Spleen (tissue), 13 donors: ENCODE measurements at regions of chr17 and their contacts with region 1.

Region 1: GRCh38 chr17:63904316-63904715 is 6.7 kb downstream of the CSHL1 start:
- DNase-seq: no peak
- H3K4me3 ChIP-seq: no peak overlapping the region
- H3K27ac ChIP-seq: no peak overlapping the region
- H3K4me1 ChIP-seq: peaks cover 0 to 7% (median 0%) of the 10 kb centered on the region in 6 donors
- H3K27me3 ChIP-seq: no peaks in the 10 kb centered on the region
- CTCF ChIP-seq: no peak
- POLR2A ChIP-seq: no peak

Region 2: GRCh38 chr17:63881876-63882601 is 22.3 kb before region 1 on chr17 and contains the start of gene GH2:
- intact Hi-C with region 1: loop called (anchors 2 kb)
- DNase-seq: peak; percentile 76
- H3K4me3 ChIP-seq: no peak within 1 kb of the TSS
- H3K27ac ChIP-seq: no peak within 1 kb of the TSS
- H3K4me1 ChIP-seq: peaks cover 0 to 3% (median 0%) of the 10 kb centered on the region in 6 donors
- H3K27me3 ChIP-seq: peaks cover 0 to 5% (median 0%) of the 10 kb centered on the region in 7 donors
- CTCF ChIP-seq: peak; percentile 39 to 83 (median 66)
- POLR2A ChIP-seq: no peak
- total RNA-seq, gene GH2: not detected

Region 3: GRCh38 chr17:64216338-64217248 is 312.3 kb after region 1 on chr17:
- intact Hi-C with region 1: no loop called
- DNase-seq: peak; percentile 76
- H3K4me3 ChIP-seq: no peak overlapping the region
- H3K27ac ChIP-seq: peak overlapping the region; percentile 10 to 75 (median 48)
- H3K4me1 ChIP-seq: peaks cover 12 to 38% (median 27%) of the 10 kb centered on the region in 6 donors
- H3K27me3 ChIP-seq: no peaks in the 10 kb centered on the region
- CTCF ChIP-seq: peak in 1 of 11 experiments; percentile 9
- POLR2A ChIP-seq: no peak

Region 4: DNA sequence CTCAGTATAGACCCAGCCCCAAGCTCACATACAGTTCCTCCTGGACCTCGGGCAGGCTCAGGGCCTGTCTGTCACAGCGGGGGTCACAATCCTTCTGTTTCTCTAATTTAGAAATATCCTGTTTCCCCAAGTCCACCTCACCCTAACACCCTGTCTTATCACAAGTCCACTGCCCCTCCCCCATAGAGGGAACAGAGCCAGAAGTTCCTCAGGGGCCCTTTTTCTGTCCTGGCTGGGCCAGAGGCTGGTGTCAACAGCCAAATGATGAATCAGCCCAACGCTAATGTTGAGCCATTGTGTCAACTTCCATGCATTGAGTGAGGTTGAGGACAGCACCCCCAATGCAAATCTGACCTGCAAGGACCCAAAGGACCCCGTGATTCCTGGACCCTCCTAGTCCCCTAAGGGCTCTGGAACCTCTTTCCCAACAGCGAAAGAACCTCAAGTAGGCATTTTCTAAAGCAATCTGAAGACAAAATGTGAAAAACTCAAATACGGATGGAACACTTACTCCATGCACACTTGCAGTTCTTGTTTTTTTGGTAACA is 427.7 kb after region 1 on chr17:
- intact Hi-C with region 1: no loop called
- DNase-seq: peak; percentile 82
- H3K4me3 ChIP-seq: peak overlapping the region in 1 of 8 donors; percentile 24
- H3K27ac ChIP-seq: peak overlapping the region in 7 of 8 donors; percentile 71 to 96 (median 86)
- H3K4me1 ChIP-seq: peaks cover 34 to 100% (median 81%) of the 10 kb centered on the region in 6 donors
- H3K27me3 ChIP-seq: no peaks in the 10 kb centered on the region
- CTCF ChIP-seq: no peak
- POLR2A ChIP-seq: no peak